ENCODE measurements at regions of chr1 and their contacts with region 1.

Region 1: DNA sequence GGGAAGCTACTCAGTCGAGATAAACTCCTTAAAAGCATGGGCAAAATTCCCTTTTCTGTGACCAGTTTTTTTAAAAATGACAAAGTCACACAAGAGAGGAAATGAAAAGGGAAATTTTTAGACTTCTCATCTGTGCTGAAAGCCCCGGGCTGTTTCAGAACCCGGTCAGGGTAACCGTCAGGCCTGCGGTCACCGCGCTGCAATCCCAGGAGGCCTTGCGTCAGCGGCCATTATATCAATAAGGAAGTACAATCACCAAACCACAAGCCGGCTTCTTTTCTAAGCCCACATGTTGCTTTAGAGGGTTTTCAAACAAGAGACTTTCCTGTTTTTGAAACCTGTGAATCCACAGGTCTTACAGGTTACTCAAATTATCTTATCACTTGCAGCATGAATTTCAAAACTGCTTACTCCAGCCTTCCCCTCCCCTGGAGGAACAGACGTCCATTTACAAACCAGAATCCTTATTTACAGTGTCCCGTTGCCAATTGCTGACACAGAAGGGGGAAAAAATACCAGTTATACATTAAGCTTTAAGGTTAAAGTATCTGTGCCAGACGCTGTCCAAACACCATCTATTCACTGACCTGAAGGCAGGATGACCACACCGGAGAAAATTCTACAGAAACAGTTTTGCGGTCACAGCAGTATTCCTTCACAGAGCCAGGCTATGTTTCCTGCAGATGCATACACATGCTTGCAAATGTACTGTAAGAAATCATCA is 165.3 kb downstream of the TOMM20 start:
- DNase-seq: peak; percentile 84
- ATAC-seq: peak; percentile 89
- H3K4me3 Mint-ChIP-seq: peak overlapping the region; percentile 82
- H3K27ac Mint-ChIP-seq: peak overlapping the region; percentile 98
- H3K4me1 Mint-ChIP-seq: peaks cover 66% of the 10 kb centered on the region
- H3K27me3 Mint-ChIP-seq: no peaks in the 10 kb centered on the region
- CTCF ChIP-seq: no peak

Region 2: DNA sequence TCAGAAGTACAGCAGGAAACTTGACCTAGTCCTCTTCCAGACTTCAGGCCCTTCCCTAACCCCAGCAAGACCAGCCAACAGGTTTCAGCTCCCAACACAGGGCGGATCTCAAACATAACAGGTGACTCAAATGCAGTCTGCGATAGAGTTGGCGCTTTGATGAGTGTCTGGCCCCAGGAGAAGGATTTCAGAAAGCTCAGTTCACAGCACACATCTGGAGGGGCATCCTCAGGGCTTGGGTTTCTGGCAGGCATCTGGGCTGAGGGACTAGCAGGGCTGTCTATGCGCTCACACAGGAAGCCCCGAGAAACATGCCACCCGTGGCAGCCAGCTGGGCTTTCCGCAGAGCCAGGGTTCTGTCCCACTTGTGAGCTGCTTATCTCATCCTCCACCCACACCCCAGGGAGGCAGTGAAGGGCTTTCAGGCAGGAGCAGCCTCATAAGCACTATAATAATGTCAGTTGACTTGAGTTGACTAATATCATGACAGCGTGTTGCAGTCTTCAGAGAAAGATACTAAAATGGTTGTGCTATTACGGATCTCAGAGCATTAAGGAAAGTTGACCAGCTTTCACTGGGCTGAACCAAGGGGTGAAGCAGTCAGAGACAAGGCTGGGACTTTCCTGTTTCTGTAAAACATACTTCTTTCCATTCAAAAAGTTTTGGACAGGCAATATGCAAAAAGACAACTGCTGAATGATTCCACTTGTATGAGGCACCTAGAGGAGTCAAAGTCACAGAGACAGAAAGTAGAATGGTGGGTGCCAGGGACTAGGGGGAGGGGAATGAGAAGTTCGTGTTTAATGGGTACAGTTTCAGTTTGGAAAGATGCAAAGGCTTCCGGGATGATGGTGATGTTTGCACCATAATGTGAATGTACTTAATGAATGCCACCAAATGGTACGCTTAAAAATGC is 120.4 kb before region 1 on chr1:
- CTCF ChIA-PET with region 1: no interaction called
- POLR2A ChIA-PET with region 1: no interaction called
- intact Hi-C with region 1: loop called (anchors 2 kb)
- DNase-seq: peak; percentile 40
- ATAC-seq: peak; percentile 76
- H3K4me3 Mint-ChIP-seq: peak overlapping the region; percentile 62
- H3K27ac Mint-ChIP-seq: peak overlapping the region; percentile 71
- H3K4me1 Mint-ChIP-seq: peaks cover 52% of the 10 kb centered on the region
- H3K27me3 Mint-ChIP-seq: no peaks in the 10 kb centered on the region
- CTCF ChIP-seq: no peak

Region 3: DNA sequence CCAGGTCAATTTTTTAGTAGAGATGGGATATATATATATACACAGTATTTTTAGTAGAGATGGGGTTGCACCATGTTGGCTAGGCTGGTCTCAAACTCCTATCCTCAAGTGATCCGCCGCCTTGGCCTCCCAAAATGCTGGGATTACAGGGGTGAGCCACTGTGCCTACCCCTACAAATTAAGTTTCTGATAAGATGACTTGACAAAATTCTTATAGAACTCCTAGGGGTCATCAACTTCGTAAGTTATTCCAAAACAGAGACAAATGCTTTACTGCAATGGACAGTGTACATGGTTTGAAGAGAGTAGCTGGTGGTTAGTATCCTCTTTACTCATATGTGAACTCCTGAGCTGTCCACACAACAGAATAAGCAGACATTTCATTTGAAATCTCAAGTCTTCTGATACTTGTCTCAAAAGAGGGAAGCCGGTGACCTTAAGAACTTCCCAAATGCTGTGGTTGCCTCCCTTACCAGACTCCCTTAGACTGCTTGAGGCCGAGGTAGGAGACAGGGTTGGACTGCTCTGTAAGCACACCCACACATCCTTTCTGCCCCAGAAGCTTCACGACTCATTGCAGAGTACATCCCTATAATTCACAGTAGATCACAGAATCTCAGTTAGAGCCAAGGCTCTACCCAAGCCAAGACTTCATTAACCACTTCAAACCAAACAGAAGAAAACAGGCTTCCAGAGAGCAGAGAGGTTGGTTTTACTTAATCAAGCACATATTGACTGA is 109.3 kb before region 1 on chr1:
- CTCF ChIA-PET with region 1: no interaction called
- POLR2A ChIA-PET with region 1: no interaction called
- intact Hi-C with region 1: no loop called
- DNase-seq: no peak
- ATAC-seq: no peak
- H3K4me3 Mint-ChIP-seq: no peak overlapping the region
- H3K27ac Mint-ChIP-seq: no peak overlapping the region
- H3K4me1 Mint-ChIP-seq: peaks cover 22% of the 10 kb centered on the region
- H3K27me3 Mint-ChIP-seq: no peaks in the 10 kb centered on the region
- CTCF ChIP-seq: no peak

Region 4: DNA sequence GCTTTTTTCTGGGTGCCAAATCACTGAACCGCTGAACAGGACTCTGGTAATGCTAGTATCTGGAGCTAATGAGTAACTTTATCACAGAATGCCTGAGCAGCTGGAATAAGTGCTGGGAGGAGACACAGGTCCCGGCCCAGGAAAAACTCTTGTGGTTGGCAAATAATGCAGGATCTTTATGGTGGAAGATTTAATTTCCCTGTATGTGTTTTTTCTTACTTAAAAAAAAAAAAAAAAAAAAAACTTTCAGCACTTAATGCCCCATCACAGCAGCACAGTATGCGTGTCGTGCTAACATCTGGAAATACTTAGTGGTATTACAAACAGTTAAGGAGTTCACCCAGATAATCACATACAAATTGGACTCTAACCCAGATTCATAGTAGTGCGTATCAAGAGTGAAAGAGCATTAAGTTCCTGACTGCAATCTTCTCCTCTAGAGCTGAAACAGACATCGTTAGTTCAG is 55.4 kb before region 1 on chr1:
- CTCF ChIA-PET with region 1: no interaction called
- POLR2A ChIA-PET with region 1: no interaction called
- intact Hi-C with region 1: no loop called
- DNase-seq: no peak
- ATAC-seq: no peak
- H3K4me3 Mint-ChIP-seq: no peak overlapping the region
- H3K27ac Mint-ChIP-seq: no peak overlapping the region
- H3K4me1 Mint-ChIP-seq: peaks cover 8% of the 10 kb centered on the region
- H3K27me3 Mint-ChIP-seq: no peaks in the 10 kb centered on the region
- CTCF ChIP-seq: no peak

Region 5: GRCh38 chr1:234925440-234926263 is 37.7 kb before region 1 on chr1:
- CTCF ChIA-PET with region 1: interaction called, 4 read pairs
- POLR2A ChIA-PET with region 1: interaction called, 6 read pairs
- intact Hi-C with region 1: loop called (anchors 1 kb)
- DNase-seq: no peak
- ATAC-seq: no peak
- H3K4me3 Mint-ChIP-seq: peak overlapping the region; percentile 78
- H3K27ac Mint-ChIP-seq: peak overlapping the region; percentile 78
- H3K4me1 Mint-ChIP-seq: peaks cover 30% of the 10 kb centered on the region
- H3K27me3 Mint-ChIP-seq: no peaks in the 10 kb centered on the region
- CTCF ChIP-seq: no peak

Region 6: GRCh38 chr1:234944439-234945344 is 18.6 kb before region 1 on chr1:
- CTCF ChIA-PET with region 1: interaction called, 4 read pairs
- POLR2A ChIA-PET with region 1: interaction called, 8 read pairs
- intact Hi-C with region 1: loop called (anchors 1 kb)
- DNase-seq: no peak
- ATAC-seq: peak; percentile 50
- H3K4me3 Mint-ChIP-seq: peak overlapping the region; percentile 58
- H3K27ac Mint-ChIP-seq: peak overlapping the region; percentile 81
- H3K4me1 Mint-ChIP-seq: peaks cover 39% of the 10 kb centered on the region
- H3K27me3 Mint-ChIP-seq: no peaks in the 10 kb centered on the region
- CTCF ChIP-seq: no peak

Region 7: GRCh38 chr1:235018161-235018560 is 54.8 kb after region 1 on chr1:
- CTCF ChIA-PET with region 1: no interaction called
- POLR2A ChIA-PET with region 1: interaction called, 12 read pairs
- intact Hi-C with region 1: no loop called
- DNase-seq: no peak
- ATAC-seq: no peak
- H3K4me3 Mint-ChIP-seq: no peak overlapping the region
- H3K27ac Mint-ChIP-seq: peak overlapping the region; percentile 68
- H3K4me1 Mint-ChIP-seq: peaks cover 72% of the 10 kb centered on the region
- H3K27me3 Mint-ChIP-seq: no peaks in the 10 kb centered on the region
- CTCF ChIP-seq: no peak

Region 8: GRCh38 chr1:235075188-235075926 is 112.0 kb after region 1 on chr1:
- CTCF ChIA-PET with region 1: no interaction called
- POLR2A ChIA-PET with region 1: interaction called, 8 read pairs
- intact Hi-C with region 1: loop called (anchors 1 kb)
- DNase-seq: peak; percentile 54
- ATAC-seq: peak; percentile 76
- H3K4me3 Mint-ChIP-seq: peak overlapping the region; percentile 75
- H3K27ac Mint-ChIP-seq: peak overlapping the region; percentile 95
- H3K4me1 Mint-ChIP-seq: peaks cover 37% of the 10 kb centered on the region
- H3K27me3 Mint-ChIP-seq: no peaks in the 10 kb centered on the region
- CTCF ChIP-seq: no peak

Measured in activated B cell treated with CpG ODN at 0.5 μM for 24 hours (primary cell).